Breast epithelium (tissue), 4 donors: ENCODE measurements at regions of chr6 and their contacts with region 1.

Region 1: DNA sequence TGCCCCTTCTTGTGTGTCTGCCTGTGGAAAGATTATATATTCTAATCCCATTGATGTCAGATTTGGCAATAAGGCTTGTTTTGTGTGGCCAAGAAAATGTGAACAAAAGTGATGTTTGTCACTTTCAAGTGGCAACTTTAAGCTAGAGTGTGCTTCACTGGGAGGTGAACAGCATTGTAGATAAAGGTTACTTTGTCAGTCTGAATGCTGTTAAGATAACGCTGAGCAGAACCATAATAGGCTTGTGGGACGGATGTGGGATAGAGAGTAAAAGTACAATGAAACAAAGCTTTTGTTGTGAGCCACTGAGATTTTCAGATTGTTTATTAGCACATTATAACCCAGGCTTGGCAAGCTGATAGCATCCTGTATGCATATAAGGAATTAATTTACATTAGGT is 303.8 kb upstream of the MAN1A1 start:
- DNase-seq: no peak
- H3K4me3 ChIP-seq: no peak overlapping the region
- H3K27ac ChIP-seq: no peak overlapping the region
- H3K4me1 ChIP-seq: no peaks in the 10 kb centered on the region
- H3K27me3 ChIP-seq: no peaks in the 10 kb centered on the region
- CTCF ChIP-seq: no peak
- POLR2A ChIP-seq: no peak

Region 2: GRCh38 chr6:119020597-119021561 is 632.5 kb before region 1 on chr6:
- intact Hi-C with region 1: loop called (anchors 10 kb)
- DNase-seq: no peak
- H3K4me3 ChIP-seq: no peak overlapping the region
- H3K27ac ChIP-seq: no peak overlapping the region
- H3K4me1 ChIP-seq: no peaks in the 10 kb centered on the region
- H3K27me3 ChIP-seq: no peaks in the 10 kb centered on the region
- CTCF ChIP-seq: no peak
- POLR2A ChIP-seq: no peak

Region 3: DNA sequence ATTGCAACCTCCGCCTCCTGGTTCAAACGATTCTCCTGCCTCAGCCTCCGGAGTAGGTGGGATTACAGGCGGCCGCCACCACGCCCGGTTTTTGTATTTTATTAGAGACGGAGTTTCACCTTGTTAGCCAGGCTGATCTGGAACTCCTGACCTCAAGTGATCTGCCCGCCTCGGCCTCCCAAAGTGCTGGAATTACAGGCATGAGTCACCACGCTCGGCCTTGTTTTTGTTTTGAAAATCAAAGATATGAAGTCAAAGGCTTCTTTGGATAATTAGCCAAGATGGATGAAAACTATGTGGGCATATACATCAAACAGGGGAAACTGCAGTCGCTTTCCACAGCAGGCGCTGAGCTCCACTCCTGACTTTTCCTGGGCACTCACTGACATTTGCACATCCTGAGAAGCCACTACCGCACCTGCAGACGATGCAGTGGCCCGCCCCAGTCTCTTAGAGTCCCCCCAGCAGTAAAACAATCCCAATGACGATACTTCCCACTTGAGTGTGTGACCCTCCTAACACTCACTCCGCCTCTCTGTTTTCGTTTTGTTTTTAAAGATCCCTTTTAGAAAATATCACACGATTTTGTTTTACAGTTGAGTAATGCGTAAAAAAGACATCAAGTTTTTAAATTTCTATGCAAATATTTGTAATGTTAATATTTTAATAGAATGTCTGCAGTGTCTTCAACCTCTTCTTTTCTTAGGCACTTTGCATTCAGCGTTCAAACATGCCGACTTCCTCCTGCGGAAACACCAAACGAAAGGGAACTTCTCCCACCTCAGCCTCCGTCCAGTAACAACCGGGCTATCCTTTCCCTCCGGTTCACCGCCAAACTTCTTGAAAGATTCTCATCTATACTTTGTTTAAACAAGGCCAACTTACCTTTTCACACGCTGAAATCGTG is 1826.4 kb after region 1 on chr6:
- intact Hi-C with region 1: loop called (anchors 10 kb)
- DNase-seq: no peak
- H3K4me3 ChIP-seq: no peak overlapping the region
- H3K27ac ChIP-seq: no peak overlapping the region
- H3K4me1 ChIP-seq: no peaks in the 10 kb centered on the region
- H3K27me3 ChIP-seq: no peaks in the 10 kb centered on the region
- CTCF ChIP-seq: no peak
- POLR2A ChIP-seq: no peak